ENCODE measurements at regions of chr11 and their contacts with region 1.

Region 1: DNA sequence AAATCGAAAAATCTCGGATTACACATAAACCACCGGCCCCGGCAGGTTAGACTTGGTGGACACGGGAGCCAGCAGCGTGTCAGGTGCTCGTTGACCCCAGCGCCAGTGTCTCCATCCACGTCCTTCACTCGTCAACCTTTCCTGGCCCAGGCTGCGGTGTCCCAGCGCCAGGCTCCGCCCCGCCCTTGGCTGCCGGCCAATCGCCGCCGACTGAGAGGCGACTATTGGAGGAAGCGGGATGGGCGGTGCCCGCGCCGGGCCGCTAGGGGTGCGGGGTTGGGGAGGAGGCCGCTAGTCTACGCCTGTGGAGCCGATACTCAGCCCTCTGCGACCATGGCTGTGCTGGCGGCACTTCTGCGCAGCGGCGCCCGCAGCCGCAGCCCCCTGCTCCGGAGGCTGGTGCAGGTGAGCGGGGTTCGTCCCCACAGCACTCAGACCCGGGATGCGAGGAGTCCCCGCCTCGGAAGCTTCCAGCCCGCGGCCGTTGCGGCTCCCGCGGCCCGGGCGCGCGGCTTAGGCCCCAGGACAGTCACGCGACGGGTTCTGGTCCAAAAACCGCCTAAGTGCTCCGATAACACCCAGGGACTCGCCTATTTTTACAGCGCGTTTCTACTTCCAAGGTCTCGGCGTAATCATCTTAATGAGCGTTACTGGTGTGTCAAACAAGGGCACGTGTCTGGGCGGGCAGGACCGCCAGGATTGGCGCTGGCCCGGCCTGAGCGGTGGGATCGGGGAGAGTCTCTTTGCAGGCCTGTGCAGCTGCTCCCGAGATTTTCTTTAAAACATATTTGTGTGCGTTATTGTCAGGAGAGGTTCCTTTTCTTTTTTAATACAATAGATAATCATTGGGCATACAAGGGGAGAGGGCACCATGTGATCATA is at the start of gene ACAT1:
- DNase-seq: peak; percentile 94
- H3K4me3 ChIP-seq: peak within 1 kb of the TSS; percentile 78
- H3K27ac ChIP-seq: peak within 1 kb of the TSS; percentile 43
- H3K4me1 ChIP-seq: peaks cover 35% of the 10 kb centered on the region
- CTCF ChIP-seq: no peak
- total RNA-seq, gene ACAT1: 69.8 and 83.2 TPM in 2 replicates

Region 2: DNA sequence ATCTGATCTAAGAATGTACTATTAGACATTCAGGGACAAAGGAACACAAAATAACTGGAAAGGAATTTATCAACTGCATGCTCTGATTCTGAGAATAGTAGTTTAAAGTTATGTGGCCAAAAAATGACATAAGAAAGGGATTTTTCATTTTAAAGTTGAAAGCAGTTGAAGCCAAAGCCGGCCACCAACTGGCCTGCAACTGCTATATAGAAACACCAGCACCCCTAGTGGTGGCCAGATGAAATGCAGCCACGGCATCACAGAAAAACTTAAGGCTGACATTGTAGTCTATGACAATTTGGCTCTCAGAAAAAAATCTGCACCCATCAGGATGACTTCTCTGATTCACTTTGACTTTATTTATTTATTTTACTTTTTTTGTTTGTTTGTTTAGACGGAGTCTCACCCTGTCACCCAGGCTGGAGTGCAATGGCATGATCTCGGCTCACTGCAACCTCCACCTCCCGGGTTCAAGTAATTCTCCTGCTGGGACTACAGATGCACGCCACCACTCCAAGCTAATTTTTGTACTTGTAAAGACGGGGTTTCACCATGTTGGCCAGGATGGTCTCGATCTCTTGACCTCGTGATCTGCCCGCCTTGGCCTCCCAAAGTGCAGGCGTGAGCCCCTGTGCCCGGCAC is 322.2 kb before region 1 on chr11:
- CTCF ChIA-PET with region 1: no interaction called
- POLR2A ChIA-PET with region 1: no interaction called
- intact Hi-C with region 1: no loop called
- DNase-seq: peak; percentile 71
- H3K4me3 ChIP-seq: no peak overlapping the region
- H3K27ac ChIP-seq: no peak overlapping the region
- H3K4me1 ChIP-seq: no peaks in the 10 kb centered on the region
- CTCF ChIP-seq: peak; percentile 94

Region 3: DNA sequence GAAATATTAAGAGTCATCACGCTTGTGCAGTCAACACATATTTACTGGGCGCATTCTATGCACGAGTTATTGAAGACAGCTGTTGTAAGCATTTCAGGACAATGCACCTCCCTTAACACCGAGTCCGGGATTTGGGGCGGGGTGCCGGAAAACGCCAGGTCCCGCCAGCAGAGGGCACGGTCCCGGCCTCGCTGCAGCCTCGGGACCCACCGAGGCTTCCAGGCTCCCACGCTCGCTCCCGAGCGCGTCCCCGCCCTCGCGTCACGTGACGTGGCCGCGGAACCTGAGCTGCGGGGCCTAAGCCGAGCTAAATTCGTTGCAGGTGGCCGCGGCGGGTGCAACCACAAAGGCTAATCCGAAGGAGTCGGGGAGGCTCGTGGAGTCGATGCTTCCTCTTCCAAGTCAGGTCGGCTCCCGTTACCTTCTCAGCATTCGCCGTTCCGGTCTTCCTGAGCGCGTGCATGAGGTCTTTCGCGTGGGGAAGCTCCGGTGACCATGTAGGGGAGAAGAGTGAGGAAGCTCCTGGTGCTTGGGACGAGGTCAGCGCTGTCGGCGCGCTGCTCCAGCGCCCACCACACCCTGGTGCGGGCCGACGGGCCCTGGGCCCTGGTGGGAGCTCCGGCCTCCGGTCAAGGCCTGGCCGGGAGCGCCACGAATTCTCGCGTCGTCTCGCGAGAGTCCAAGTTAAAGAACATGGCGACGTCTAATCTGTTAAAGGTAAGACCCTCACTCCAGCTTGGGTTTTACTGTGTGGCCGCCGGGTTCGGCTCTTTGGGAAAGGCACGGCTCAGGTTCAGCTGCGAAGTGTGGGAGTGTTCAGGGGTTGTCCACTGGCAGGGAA is 112.6 kb before region 1 on chr11 and contains the start of gene CUL5:
- CTCF ChIA-PET with region 1: interaction called, 3 read pairs
- POLR2A ChIA-PET with region 1: no interaction called
- intact Hi-C with region 1: loop called (anchors 2 kb)
- DNase-seq: peak; percentile 93
- H3K4me3 ChIP-seq: peak within 1 kb of the TSS; percentile 98
- H3K27ac ChIP-seq: peak within 1 kb of the TSS; percentile 80
- H3K4me1 ChIP-seq: peaks cover 26% of the 10 kb centered on the region
- CTCF ChIP-seq: peak; percentile 86
- total RNA-seq, gene CUL5: 18.8 and 20.1 TPM in 2 replicates

Region 4: DNA sequence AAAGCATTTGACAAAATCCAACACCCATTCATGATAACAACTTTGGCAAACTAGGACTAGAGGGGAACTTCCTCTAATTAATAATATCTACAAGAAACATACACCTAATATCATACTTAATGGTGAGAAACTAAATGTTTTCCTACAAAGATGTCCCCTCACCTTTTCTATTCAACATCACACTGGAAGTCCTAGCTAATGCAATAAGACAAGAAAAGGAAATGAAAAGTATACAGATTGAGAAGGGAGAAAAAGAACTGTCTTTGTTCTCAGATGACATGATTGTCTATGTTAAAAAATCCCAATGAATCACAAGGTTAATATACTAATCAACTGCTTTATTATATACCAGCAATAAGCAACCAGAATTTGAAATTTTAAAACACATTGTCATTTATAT is 293.4 kb after region 1 on chr11:
- CTCF ChIA-PET with region 1: no interaction called
- POLR2A ChIA-PET with region 1: no interaction called
- intact Hi-C with region 1: loop called (anchors 10 kb)
- DNase-seq: no peak
- H3K4me3 ChIP-seq: no peak overlapping the region
- H3K27ac ChIP-seq: no peak overlapping the region
- H3K4me1 ChIP-seq: no peaks in the 10 kb centered on the region
- CTCF ChIP-seq: no peak

Region 5: DNA sequence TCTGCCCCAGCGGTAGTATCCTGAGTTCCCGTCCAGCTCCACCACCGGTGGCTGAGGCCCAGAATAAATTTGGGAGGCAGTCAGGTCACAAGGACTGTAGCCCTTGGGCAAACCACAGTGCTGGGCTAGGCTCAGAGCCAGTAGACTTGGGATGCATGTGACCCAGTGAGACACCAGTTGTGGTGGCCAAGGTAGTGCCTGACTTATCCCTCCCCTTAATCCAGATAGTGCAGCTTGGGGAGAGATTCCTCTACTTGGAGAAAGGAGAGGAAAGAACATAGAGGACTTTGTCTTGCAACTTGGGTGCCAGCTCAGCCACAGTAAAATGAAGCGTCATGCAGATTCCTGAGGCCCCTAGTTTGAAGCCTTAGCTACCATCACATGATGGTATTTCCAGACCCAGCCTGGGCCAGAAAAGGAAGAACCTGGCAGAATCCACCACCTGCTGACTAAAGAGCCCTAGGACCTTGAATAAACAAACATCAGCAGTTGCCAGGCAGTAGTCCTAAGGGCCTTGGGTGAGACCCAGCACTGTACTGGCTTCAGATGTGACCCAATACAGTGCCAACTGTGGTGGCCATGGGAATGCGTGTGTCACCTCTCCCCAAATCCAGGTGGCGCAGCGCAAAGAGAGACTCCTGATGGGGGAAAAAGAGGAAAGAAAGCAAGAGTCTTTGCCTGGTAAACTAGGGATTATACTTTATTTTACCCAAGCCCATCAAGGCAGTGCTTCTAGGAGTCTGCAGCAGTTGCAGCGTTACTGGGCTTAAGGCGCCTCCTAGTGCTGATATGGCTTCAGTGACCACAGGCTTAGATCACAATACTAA is 526.4 kb after region 1 on chr11:
- CTCF ChIA-PET with region 1: no interaction called
- POLR2A ChIA-PET with region 1: interaction called, 5 read pairs
- intact Hi-C with region 1: loop called (anchors 1 kb)
- DNase-seq: peak; percentile 67
- H3K4me3 ChIP-seq: no peak overlapping the region
- H3K27ac ChIP-seq: no peak overlapping the region
- H3K4me1 ChIP-seq: no peaks in the 10 kb centered on the region
- CTCF ChIP-seq: peak; percentile 84